ENCODE measurements at regions of chr5 and their contacts with region 1.

Region 1: DNA sequence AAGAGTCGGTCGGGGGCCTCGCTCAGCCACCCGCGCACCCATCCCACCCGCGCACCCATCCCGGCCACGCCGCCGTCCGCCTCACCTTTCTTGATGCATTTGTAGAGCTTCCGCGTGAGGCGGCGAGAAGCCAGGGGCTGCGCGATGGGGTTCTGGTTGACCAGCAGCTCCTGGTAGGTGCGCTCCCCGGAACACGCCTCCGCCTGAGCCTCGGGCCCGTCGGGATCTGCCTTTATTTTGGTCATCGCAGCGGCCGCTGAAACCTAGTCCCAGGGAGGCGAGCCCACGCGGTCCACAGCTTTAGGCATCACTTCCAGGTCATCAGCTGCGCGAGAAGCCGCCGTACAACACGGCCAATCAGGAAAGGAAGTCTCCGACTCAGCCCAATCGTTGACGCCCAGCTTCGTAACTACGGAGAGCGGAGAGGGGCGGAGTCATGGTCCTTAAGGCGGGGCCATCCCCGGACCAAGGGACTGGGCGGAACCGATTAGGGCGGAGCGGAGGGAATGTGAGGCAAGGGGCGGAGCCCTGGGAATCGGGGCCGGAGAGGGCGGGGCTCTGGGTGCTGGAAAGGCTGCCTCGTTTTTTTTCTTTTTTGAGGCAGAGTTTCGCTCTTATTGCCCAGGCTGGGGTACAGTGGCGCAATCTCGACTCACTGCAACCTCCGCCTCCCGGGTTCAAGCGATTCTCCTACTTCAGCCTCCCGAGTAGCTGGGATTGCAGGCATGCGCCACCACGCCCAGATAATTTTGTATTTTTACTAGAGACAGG is at the start of gene NHP2:
- DNase-seq: peak; percentile 98
- ATAC-seq: peak; percentile 94
- H3K4me3 Mint-ChIP-seq: peak within 1 kb of the TSS; percentile 96
- H3K27ac Mint-ChIP-seq: peak within 1 kb of the TSS; percentile 91
- H3K4me1 Mint-ChIP-seq: peaks cover 37% of the 10 kb centered on the region
- H3K27me3 Mint-ChIP-seq: no peaks in the 10 kb centered on the region
- total RNA-seq, gene NHP2: 113 to 124 TPM

Region 2: DNA sequence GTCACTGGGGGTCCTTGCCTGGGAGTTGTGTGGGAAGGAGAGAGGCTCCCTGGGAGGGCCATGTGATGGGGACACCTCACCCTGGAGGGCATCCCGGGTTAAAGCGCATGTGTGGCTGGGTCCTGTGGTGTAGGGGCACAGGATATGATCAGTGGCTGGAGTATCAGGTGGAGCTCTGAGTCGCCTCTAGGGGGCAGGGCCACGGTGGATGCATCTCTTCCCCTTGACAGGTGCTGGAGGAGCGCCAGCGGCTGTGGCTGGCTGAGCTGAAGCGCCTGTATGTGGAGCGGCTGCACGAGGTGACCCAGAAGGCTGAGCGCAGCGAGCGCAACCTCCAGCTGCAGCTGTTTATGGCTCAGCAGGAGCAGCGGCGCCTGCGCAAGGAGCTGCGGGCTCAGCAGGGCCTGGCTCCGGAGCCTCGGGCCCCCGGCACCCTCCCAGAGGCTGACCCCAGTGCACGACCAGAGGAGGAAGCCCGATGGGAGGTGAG is 32.8 kb before region 1 on chr5:
- POLR2A ChIA-PET with region 1: interaction called, 11 read pairs
- DNase-seq: peak; percentile 84
- ATAC-seq: peak; percentile 93
- H3K4me3 Mint-ChIP-seq: no peak overlapping the region
- H3K27ac Mint-ChIP-seq: no peak overlapping the region
- H3K4me1 Mint-ChIP-seq: peaks cover 18% of the 10 kb centered on the region
- H3K27me3 Mint-ChIP-seq: peaks cover 4% of the 10 kb centered on the region

Region 3: DNA sequence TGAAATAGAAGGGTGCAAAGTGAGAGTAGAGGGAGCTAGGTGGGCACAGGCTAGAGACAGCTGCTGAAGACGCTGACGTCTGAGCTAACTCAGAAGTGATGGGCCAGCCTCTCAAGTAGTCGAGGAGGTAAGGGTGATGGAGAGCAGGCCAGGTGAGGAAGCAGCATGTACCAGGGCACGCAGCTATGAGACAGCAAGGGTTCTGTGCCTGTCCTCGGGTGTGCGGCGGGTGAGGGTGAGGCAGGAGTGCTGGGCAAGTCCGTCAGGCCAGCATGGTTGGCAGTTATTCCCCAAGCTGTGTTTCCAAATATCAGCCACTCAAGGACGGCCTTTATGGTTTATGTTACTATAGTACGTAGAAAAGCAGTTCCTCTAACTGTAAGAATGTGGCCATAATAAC is 16.8 kb before region 1 on chr5:
- POLR2A ChIA-PET with region 1: no interaction called
- DNase-seq: no peak
- ATAC-seq: no peak
- H3K4me3 Mint-ChIP-seq: no peak overlapping the region
- H3K27ac Mint-ChIP-seq: no peak overlapping the region
- H3K4me1 Mint-ChIP-seq: peaks cover 2% of the 10 kb centered on the region
- H3K27me3 Mint-ChIP-seq: no peaks in the 10 kb centered on the region

Measured in activated naive CD8-positive, alpha-beta T cell treated with anti-CD3 and anti-CD28 coated beads, Interleukin-2, amount 10 ng/mL, durations not matched to agents 7 days and 5 days (primary cell).